ENCODE measurements at regions of chr9 and their contacts with region 1.

Region 1: GRCh38 chr9:133362359-133363044 is 6.2 kb downstream of the SURF2 start:
- DNase-seq: no peak
- H3K4me3 ChIP-seq: no peak overlapping the region
- H3K27ac ChIP-seq: no peak overlapping the region
- H3K4me1 ChIP-seq: peaks cover 0 to 2% (median under 1%) of the 10 kb centered on the region in 4 experiments; a peak in 2 of 7 replicates
- H3K27me3 ChIP-seq: no peaks in the 10 kb centered on the region
- CTCF ChIP-seq: no peak
- EP300 ChIP-seq: no peak
- POLR2A ChIP-seq: no peak; a peak in 1 of 3 replicates
- RAD21 ChIP-seq: no peak

Region 2: DNA sequence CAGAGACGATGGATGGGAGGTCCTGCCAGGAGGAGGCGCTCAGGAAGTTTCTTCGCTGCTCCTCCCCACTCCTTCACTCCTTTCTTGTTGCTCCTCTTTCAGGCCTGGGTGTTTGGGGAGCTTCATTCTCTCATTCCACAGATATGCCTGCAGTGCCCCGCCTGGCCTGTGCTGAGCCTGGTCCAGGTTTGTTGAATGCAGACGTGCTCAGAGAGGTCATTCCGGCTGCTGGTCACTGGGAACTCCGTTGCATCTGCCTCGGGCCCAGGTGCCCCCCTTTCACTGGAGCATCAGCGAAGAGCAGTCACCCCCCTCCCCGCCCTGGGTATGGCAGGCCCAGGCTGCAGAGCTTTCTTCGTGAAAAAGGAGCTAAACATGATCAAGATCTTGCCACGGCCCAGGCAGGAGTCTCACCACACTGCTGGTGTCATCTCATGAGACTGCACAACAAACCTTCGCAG is 42.1 kb before region 1 on chr9:
- CTCF ChIA-PET with region 1: no interaction called
- POLR2A ChIA-PET with region 1: no interaction called
- DNase-seq: no peak
- H3K4me3 ChIP-seq: no peak overlapping the region
- H3K27ac ChIP-seq: no peak overlapping the region
- H3K4me1 ChIP-seq: no peaks in the 10 kb centered on the region
- H3K27me3 ChIP-seq: no peaks in the 10 kb centered on the region
- CTCF ChIP-seq: peak; percentile 18 to 52 (median 38)
- EP300 ChIP-seq: no peak
- POLR2A ChIP-seq: no peak
- RAD21 ChIP-seq: peak; percentile 20 to 29; a peak in 3 of 4 replicates

Region 3: DNA sequence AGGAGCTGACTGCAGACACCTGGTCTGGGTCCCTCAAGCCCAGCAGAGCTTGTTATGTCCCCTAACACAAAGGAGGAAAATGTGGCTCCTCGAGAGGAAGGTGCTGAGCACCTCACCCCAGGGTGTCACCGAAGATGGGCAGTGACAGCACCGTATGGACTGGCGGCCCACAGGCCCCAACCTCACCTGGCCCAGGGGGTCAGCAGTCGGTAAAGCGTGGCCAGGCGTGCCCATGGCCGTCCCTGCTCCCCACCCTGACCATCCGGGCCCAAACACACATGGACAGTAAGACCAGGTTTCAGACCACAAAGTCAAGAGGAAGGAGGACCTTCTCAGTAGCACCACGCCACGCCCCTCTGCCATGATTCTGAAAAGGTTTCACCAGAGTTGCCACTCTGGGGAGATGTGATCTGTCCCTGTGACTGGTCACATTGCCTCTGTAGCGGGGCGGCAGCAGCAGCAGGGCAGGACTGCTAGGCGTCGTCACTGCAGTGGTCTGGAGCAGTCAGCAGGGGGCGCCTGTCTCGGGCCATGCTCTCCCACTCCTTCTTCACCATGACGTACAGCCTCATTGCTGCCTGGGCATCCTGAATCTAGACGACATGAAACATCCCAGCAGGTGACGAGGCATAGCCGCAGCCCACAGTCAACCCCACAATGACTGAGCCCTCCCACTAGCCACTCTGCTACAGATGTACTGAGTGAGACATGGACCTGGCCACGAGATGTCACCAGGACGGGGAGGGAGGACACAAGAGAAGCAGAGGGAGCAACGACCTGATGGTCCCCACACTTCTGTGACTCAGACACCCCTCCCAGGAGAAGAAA is 44.2 kb after region 1 on chr9:
- CTCF ChIA-PET with region 1: interaction called, 22 read pairs
- POLR2A ChIA-PET with region 1: interaction called, 6 read pairs
- DNase-seq: peak; percentile 49 to 89
- H3K4me3 ChIP-seq: no peak overlapping the region
- H3K27ac ChIP-seq: no peak overlapping the region
- H3K4me1 ChIP-seq: no peaks in the 10 kb centered on the region
- H3K27me3 ChIP-seq: no peaks in the 10 kb centered on the region
- CTCF ChIP-seq: peak in 2 of 3 experiments; percentile 86 to 98; a peak in 3 of 4 replicates
- EP300 ChIP-seq: no peak
- POLR2A ChIP-seq: no peak
- RAD21 ChIP-seq: peak; percentile 55 to 60